ENCODE measurements at regions of chr14 and their contacts with region 1.

Region 1: GRCh38 chr14:57375156-57375555 is 15.2 kb upstream of the NAA30 start:
- DNase-seq: no peak
- ATAC-seq: no peak
- H3K4me3 ChIP-seq: no peak overlapping the region
- H3K27ac ChIP-seq: no peak overlapping the region
- H3K4me1 ChIP-seq: no peaks in the 10 kb centered on the region
- CTCF ChIP-seq: no peak
- EP300 ChIP-seq: no peak
- POLR2A ChIP-seq: no peak
- RAD21 ChIP-seq: no peak

Region 2: GRCh38 chr14:57254884-57255283 is 120.3 kb before region 1 on chr14:
- CTCF ChIA-PET with region 1: no interaction called
- POLR2A ChIA-PET with region 1: no interaction called
- DNase-seq: no peak
- ATAC-seq: no peak
- H3K4me3 ChIP-seq: no peak overlapping the region
- H3K27ac ChIP-seq: no peak overlapping the region
- H3K4me1 ChIP-seq: no peaks in the 10 kb centered on the region
- CTCF ChIP-seq: no peak
- EP300 ChIP-seq: no peak
- POLR2A ChIP-seq: no peak
- RAD21 ChIP-seq: no peak

Region 3: DNA sequence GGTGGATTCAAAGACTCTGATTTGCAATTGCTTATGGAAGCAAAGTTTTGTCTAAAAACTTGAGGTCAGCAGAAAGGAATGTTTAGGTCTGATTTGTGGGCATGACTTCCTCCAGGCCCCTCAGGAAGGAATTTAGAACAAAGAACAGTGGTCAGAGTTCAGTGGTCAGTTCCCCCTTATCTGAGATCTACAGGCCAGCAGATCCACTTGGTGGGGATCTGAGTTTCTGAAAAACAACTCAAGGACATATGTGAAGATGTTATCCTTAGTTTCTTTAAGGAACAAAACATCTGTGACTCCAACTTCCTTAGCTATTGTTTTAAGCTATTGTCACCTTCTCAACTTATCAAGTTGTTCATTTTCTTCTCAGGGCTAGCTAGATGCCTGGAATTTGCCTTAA is 12.8 kb before region 1 on chr14:
- CTCF ChIA-PET with region 1: interaction called, 10 read pairs
- POLR2A ChIA-PET with region 1: no interaction called
- DNase-seq: no peak
- ATAC-seq: no peak
- H3K4me3 ChIP-seq: no peak overlapping the region
- H3K27ac ChIP-seq: no peak overlapping the region
- H3K4me1 ChIP-seq: no peaks in the 10 kb centered on the region
- CTCF ChIP-seq: no peak
- EP300 ChIP-seq: no peak
- POLR2A ChIP-seq: no peak
- RAD21 ChIP-seq: no peak

Measured in A549 (cell line).